Heart left ventricle (tissue), 16 donors: ENCODE measurements at regions of chr9 and their contacts with region 1.

Region 1: GRCh38 chr9:13485068-13485596 is 205.6 kb upstream of the MPDZ start:
- DNase-seq: peak; percentile 32 to 79 (median 72)
- ATAC-seq: peak; percentile 97 to 99 (median 98)
- H3K4me3 ChIP-seq: no peak overlapping the region
- H3K27ac ChIP-seq: peak overlapping the region in 11 of 12 donors; percentile 26 to 86 (median 71)
- H3K4me1 ChIP-seq: peaks cover 0 to 27% (median 10%) of the 10 kb centered on the region in 12 donors
- H3K27me3 ChIP-seq: no peaks in the 10 kb centered on the region
- CTCF ChIP-seq: peak in 3 of 12 donors; percentile 16 to 30 (median 20)
- POLR2A ChIP-seq: no peak

Region 2: DNA sequence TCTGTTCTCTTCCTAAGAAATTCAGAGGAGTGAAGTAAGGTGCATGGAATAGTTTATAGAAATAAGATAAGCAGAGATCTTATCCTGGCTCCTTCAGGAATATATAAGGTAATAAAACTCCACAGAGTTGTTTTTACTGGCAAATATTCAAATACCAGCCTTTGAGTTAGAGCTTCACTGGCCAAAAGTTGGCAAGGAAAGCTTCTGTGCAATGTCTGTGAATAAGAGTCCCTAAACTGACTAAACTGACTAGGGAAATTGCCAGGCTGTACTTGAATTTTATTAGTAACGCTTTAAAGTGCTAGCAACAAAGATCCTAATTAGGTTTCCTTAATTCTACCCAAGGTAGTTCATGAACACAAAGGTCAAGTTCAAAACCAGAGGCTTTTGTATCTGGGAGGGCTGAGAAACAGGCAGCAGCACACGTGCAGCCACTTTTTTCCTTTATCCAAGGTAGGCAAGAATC is 74.5 kb before region 1 on chr9:
- intact Hi-C with region 1: no loop called
- DNase-seq: no peak
- ATAC-seq: no peak
- H3K4me3 ChIP-seq: no peak overlapping the region
- H3K27ac ChIP-seq: peak overlapping the region in 2 of 12 donors; percentile 15 to 26
- H3K4me1 ChIP-seq: peaks cover 0 to 14% (median 0%) of the 10 kb centered on the region in 12 donors
- H3K27me3 ChIP-seq: no peaks in the 10 kb centered on the region
- CTCF ChIP-seq: no peak
- POLR2A ChIP-seq: no peak

Region 3: GRCh38 chr9:13461414-13461991 is 23.6 kb before region 1 on chr9:
- intact Hi-C with region 1: no loop called
- DNase-seq: no peak
- ATAC-seq: peak in 2 of 4 donors; percentile 65 to 75
- H3K4me3 ChIP-seq: no peak overlapping the region
- H3K27ac ChIP-seq: no peak overlapping the region
- H3K4me1 ChIP-seq: peaks cover 0 to 5% (median 0%) of the 10 kb centered on the region in 12 donors
- H3K27me3 ChIP-seq: no peaks in the 10 kb centered on the region
- CTCF ChIP-seq: no peak
- POLR2A ChIP-seq: no peak

Region 4: GRCh38 chr9:13552606-13553215 is 67.6 kb after region 1 on chr9:
- intact Hi-C with region 1: loop called in 3 of 10 experiments (anchors 5 to 10 kb)
- DNase-seq: no peak
- ATAC-seq: peak; percentile 77 to 91 (median 82)
- H3K4me3 ChIP-seq: no peak overlapping the region
- H3K27ac ChIP-seq: peak overlapping the region in 4 of 12 donors; percentile 4 to 38 (median 23)
- H3K4me1 ChIP-seq: peaks cover 0 to 27% (median 0%) of the 10 kb centered on the region in 12 donors
- H3K27me3 ChIP-seq: no peaks in the 10 kb centered on the region
- CTCF ChIP-seq: no peak
- POLR2A ChIP-seq: no peak

Region 5: DNA sequence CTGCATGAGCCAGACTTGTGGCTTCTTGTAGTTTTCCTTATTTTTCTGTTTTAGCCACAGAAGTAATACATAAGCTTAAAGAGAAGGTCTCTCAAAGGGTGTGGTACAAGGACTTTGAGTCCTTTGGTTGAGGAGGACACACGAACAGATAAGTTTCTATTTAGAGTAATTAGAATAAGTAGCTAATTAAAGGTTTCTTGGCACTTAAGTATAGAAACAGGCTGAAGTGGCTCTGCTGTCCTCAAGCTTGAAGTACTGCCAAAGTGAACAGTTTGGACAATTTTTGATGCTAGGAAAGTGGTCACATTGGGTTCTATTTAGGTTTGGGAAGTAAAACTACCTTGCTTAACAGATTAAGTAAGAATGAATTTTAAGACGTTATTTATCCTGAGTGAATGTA is 72.6 kb after region 1 on chr9:
- intact Hi-C with region 1: loop called in 2 of 10 experiments (anchors 5 to 10 kb)
- DNase-seq: no peak
- ATAC-seq: peak; percentile 80 to 91 (median 88)
- H3K4me3 ChIP-seq: no peak overlapping the region
- H3K27ac ChIP-seq: peak overlapping the region in 11 of 12 donors; percentile 4 to 69 (median 39)
- H3K4me1 ChIP-seq: peaks cover 0 to 27% (median 0%) of the 10 kb centered on the region in 12 donors
- H3K27me3 ChIP-seq: no peaks in the 10 kb centered on the region
- CTCF ChIP-seq: no peak
- POLR2A ChIP-seq: no peak